ENCODE measurements at regions of chr14 and their contacts with region 1.

Region 1: GRCh38 chr14:68788996-68789820 is 3.7 kb downstream of the ZFP36L1 start:
- DNase-seq: no peak
- H3K4me3 ChIP-seq: peak overlapping the region; percentile 99
- CTCF ChIP-seq: peak; percentile 83

Region 2: GRCh38 chr14:68695326-68695768 is 93.9 kb before region 1 on chr14:
- CTCF ChIA-PET with region 1: interaction called, 26 read pairs
- POLR2A ChIA-PET with region 1: interaction called, 41 read pairs
- DNase-seq: peak; percentile 97
- H3K4me3 ChIP-seq: no peak overlapping the region
- CTCF ChIP-seq: no peak

Region 3: GRCh38 chr14:68775143-68776126 is 13.8 kb before region 1 on chr14:
- CTCF ChIA-PET with region 1: interaction called, 13 read pairs
- POLR2A ChIA-PET with region 1: interaction called, 46 read pairs
- DNase-seq: no peak
- H3K4me3 ChIP-seq: no peak overlapping the region
- CTCF ChIP-seq: no peak